ENCODE measurements at regions of chr1 and their contacts with region 1.

Region 1: DNA sequence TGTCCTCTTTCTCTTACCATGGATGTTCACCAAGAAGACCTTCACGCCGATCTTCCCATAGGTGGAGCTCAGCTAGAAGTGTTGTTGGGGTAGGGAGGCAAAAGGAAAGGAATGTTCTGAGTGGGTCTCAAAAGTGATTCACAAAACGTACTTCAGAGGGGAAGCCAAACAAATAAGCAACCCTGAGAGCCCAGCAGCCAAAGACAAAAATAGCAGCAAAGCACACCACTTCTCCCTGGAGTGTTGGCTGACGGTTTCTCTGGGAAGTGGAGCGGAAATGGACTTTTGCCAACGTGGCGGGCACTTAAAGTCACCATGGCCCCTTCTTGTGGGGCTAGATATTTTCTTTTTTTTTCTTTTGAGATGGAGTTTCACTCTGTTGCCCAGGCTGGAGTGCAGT is 23.1 kb downstream of the SLC26A9 start:
- DNase-seq: peak; percentile 34 to 81
- H3K4me3 ChIP-seq: no peak overlapping the region
- H3K27ac ChIP-seq: peak overlapping the region; percentile 43 to 62
- H3K4me1 ChIP-seq: peaks cover 0 to 54% (median 28%) of the 10 kb centered on the region in 4 donors
- H3K27me3 ChIP-seq: no peaks in the 10 kb centered on the region
- CTCF ChIP-seq: no peak

Region 2: GRCh38 chr1:206117151-206117948 is 197.2 kb after region 1 on chr1 and contains the start of gene AVPR1B:
- intact Hi-C with region 1: loop called (anchors 10 kb)
- DNase-seq: peak in 1 of 2 donors; percentile 46
- H3K4me3 ChIP-seq: peak within 1 kb of the TSS; percentile 35 to 54
- H3K27ac ChIP-seq: no peak within 1 kb of the TSS
- H3K4me1 ChIP-seq: peaks cover 0 to 15% (median 14%) of the 10 kb centered on the region in 4 donors
- H3K27me3 ChIP-seq: no peaks in the 10 kb centered on the region
- CTCF ChIP-seq: no peak